ENCODE measurements at regions of chr11 and their contacts with region 1.

Region 1: GRCh38 chr11:112289588-112290492 is 29.2 kb upstream of the PLET1 start:
- DNase-seq: peak; percentile 88 to 96
- ATAC-seq: peak; percentile 95
- H3K4me3 ChIP-seq: peak overlapping the region; percentile 55 to 76
- H3K27ac ChIP-seq: peak overlapping the region; percentile 83 to 92
- H3K4me1 ChIP-seq: peaks cover 0 to 2% of the 10 kb centered on the region in 2 donors
- H3K27me3 ChIP-seq: no peaks in the 10 kb centered on the region

Region 2: DNA sequence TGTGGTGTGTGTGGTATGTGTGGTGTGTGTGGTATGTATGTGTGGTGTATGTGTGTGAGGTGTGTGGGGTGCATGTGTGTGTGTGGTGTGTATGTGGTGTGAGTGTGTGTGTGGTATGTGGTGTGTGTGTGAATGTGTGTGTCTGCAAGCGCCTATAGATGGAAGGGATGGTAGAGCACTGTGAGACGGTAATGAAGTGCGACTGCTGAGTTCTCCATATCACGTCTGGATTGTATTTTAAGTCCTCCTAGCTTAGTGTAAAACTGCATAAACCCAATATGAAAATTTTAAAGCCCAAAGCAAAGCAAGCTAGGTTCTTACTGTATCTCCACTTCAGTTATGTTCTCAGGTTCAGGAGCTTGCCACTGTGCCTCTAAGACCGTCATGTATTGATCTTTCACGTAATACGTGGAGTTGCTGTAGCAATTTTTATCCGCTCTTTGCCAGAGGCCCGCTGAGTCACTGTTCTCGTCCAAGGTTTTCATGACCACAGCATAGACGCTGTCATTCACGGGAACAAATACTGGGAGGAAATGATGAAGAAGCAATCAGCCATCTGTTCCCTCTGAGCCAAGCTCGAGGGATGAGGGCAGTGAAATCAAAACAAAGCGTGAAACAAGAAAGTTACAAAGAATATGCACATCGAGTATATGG is 34.6 kb before region 1 on chr11:
- intact Hi-C with region 1: no loop called
- DNase-seq: peak in 1 of 2 donors; percentile 52
- ATAC-seq: no peak
- H3K4me3 ChIP-seq: no peak overlapping the region
- H3K27ac ChIP-seq: no peak overlapping the region
- H3K4me1 ChIP-seq: no peaks in the 10 kb centered on the region
- H3K27me3 ChIP-seq: no peaks in the 10 kb centered on the region

Region 3: DNA sequence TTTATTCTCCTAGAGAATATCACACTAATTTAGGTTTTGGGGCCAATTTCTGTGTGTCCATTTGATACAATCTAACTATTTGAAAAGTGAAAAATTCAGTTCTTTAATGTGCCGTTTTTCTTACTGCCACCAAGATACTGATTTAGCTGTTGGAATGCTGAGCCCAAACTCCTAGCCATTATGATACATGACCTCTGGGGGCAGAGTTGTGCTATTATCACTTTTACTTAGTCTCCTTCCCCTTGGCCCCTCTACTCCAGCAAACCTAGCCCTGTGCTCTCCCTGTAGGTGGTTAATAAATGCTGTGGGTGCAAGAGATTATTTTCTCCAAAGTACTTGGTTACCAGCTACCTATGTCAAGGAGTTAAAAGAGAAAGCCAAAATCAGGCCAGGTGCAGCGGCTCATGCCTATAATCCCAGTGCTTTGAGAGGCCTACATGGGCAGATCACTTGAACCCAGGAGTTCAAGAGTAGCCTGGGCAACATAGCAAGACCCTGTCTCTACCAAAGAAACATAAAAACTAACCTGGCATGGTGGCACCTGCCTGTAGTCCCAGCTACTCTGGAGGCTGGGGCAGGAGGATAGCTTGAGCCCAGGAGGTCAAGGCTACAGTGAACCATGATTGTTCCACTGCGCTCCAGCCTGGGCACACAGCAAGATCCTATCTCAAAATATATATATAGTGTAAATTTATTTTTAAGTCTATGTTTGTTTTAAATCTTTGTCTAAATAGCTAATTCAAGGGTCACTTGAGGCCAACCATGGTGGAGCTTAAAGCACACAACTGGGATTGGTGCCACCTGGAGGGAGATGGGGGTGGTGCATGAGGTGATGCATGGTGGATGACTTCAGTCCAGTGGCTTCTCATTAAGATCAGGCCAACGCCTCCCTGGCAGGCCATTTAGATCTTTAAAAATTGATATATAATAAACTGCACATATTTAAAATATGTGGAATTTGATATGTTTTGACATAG is 164.0 kb after region 1 on chr11:
- intact Hi-C with region 1: loop called in 1 of 2 experiments (anchors 2 kb)
- DNase-seq: peak; percentile 52 to 77
- ATAC-seq: no peak
- H3K4me3 ChIP-seq: no peak overlapping the region
- H3K27ac ChIP-seq: no peak overlapping the region
- H3K4me1 ChIP-seq: peaks cover 0 to 2% of the 10 kb centered on the region in 2 donors
- H3K27me3 ChIP-seq: no peaks in the 10 kb centered on the region

Region 4: DNA sequence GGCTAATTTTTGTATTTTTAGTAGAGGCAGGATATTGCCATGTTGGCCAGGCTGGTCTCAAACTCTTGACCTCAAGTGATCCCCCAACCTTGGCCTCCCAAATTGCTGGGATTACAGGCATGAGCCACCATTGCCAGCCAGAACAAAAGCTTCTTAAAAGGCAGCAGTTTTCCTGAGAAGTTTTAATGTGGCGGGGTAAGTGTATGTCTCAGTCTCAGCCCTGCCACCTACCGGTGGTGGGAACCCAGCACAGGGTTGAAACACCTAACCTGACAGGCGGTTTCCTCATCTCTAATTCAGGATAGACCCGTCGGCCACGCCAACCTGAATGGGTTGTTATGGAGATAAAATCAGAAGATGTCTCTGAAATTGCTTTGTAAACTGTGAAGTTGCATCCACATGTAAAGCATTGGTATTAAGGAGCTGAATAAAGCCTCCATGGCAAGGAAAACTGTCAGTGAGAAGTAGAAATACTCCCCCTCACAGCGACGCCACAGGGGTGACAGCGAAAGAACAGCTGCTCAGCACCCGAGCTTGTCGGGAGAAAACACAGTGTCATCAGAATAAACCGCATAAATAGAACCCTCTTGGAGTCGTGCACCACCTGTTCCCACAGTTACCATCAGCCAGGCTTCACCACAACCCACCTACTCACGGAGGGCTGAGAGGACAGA is 505.4 kb after region 1 on chr11:
- intact Hi-C with region 1: loop called (anchors 10 kb)
- DNase-seq: peak in 1 of 2 donors; percentile 62
- ATAC-seq: no peak
- H3K4me3 ChIP-seq: no peak overlapping the region
- H3K27ac ChIP-seq: peak overlapping the region; percentile 29 to 79
- H3K4me1 ChIP-seq: no peaks in the 10 kb centered on the region
- H3K27me3 ChIP-seq: no peaks in the 10 kb centered on the region

Region 5: DNA sequence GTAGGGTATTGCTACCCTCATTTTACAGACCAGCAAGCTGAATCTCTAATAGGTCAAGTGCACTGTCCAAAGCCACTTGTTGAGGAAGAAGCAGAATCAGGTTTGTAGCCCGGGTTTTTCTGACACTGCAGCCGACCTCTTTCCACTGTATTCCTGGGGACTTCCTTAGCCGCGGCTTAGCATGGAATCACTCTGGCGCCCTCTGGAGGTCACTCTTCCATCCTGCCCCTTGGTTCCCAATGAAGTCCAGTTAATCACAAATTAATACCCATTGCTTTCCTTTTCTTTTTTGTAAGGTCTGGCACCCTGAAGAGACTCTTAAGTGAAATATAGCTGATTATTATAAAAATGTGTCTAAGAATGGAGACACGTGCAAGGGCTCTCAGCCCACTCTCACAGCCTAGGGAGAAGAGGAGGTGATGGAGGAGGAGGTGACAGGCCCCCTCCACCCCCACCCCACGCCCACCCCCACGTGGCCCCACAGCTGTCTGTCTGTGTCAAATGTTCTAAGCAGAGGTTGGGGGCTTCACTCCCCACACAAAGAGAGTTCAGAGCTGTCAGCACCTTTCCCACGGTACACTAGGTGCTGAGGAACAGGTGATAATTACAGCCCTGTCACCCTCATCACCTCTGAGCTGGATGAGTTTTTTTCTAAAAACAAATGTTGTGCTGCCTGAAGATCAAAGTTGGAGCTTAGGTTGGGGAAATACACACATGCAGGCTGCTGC is 1243.0 kb after region 1 on chr11:
- intact Hi-C with region 1: loop called in 1 of 2 experiments (anchors 10 kb)
- DNase-seq: peak; percentile 77 to 91
- ATAC-seq: peak; percentile 81
- H3K4me3 ChIP-seq: no peak overlapping the region
- H3K27ac ChIP-seq: no peak overlapping the region
- H3K4me1 ChIP-seq: no peaks in the 10 kb centered on the region
- H3K27me3 ChIP-seq: no peaks in the 10 kb centered on the region

Measured in aorta (tissue), 5 donors.